SK-N-SH (cell line): ENCODE measurements at regions of chr1 and their contacts with region 1.

Region 1: DNA sequence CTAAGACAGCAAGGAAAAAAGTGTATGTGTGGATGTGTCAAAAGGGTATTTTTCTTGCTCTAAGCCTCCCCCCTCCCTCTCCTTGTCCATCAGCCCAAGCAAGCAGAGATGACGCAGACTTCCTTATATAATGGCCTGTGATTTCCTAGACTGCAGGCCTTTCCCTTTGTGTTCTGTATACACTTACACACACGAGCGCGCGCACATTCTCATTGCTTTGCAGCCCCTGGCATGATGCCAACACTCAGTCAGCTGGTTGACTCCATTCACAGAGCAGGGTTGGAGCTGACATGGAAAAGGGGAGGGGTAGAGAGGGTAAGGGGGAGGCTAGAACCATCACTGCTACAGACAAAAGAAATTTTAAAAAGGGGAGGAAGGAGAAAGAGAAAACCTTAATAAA is 41.8 kb downstream of the GATAD2B start:
- DNase-seq: peak; percentile 81
- H3K4me3 ChIP-seq: peak overlapping the region; percentile 36 to 56
- H3K27ac ChIP-seq: peak overlapping the region; percentile 87 to 90
- H3K4me1 ChIP-seq: peaks cover 15 to 16% of the 10 kb centered on the region in 2 experiments
- H3K27me3 ChIP-seq: no peaks in the 10 kb centered on the region
- CTCF ChIP-seq: no peak
- EP300 ChIP-seq: no peak; a peak in 1 of 4 replicates
- RAD21 ChIP-seq: no peak

Region 2: DNA sequence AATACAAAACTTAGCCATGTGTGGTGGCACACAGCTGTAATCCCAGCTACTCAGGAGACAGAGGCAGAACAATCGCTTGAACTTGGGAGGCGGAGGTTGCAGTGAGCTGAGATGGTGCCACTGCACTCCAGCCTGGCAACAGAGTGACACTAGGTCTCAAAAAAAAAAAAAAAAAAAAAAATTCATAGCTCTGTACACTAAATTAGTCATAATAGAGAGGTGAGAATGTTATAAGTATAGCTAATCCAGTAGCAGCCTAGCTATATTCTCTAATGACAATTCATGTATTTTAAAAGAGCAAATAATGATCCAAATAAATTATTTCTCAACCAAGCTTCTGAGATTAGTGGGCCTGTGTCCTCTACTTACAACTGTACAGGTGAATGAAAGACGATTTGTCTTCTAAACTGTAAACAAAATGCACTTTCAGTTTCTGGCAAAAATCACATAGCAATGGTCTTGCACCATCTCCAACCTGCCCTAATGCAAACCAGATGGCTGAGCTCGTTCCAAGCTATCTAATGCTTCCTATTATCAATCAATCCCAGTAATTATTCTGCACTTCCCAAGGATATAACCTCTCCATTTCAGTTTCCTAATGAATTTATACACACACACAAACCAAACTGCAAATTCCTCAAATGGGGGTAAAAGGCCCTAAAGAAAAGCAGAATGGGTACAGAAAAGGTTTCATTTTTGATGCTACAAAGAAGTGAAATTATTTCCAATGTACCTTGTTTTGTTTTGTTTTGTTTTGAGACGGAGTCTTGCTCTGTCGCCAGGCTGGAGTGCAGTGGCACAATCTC is 14.7 kb before region 1 on chr1:
- CTCF ChIA-PET with region 1: interaction called, 3 read pairs
- POLR2A ChIA-PET with region 1: interaction called, 11 read pairs
- DNase-seq: peak; percentile 57
- H3K4me3 ChIP-seq: peak overlapping the region in 1 of 2 experiments; percentile 28; a peak in 2 of 4 replicates
- H3K27ac ChIP-seq: peak overlapping the region; percentile 29 to 35; a peak in 3 of 4 replicates
- H3K4me1 ChIP-seq: peaks cover 8 to 14% of the 10 kb centered on the region in 2 experiments; a peak in 2 of 4 replicates
- H3K27me3 ChIP-seq: no peaks in the 10 kb centered on the region
- CTCF ChIP-seq: no peak
- EP300 ChIP-seq: no peak; a peak in 1 of 4 replicates
- RAD21 ChIP-seq: no peak

Region 3: DNA sequence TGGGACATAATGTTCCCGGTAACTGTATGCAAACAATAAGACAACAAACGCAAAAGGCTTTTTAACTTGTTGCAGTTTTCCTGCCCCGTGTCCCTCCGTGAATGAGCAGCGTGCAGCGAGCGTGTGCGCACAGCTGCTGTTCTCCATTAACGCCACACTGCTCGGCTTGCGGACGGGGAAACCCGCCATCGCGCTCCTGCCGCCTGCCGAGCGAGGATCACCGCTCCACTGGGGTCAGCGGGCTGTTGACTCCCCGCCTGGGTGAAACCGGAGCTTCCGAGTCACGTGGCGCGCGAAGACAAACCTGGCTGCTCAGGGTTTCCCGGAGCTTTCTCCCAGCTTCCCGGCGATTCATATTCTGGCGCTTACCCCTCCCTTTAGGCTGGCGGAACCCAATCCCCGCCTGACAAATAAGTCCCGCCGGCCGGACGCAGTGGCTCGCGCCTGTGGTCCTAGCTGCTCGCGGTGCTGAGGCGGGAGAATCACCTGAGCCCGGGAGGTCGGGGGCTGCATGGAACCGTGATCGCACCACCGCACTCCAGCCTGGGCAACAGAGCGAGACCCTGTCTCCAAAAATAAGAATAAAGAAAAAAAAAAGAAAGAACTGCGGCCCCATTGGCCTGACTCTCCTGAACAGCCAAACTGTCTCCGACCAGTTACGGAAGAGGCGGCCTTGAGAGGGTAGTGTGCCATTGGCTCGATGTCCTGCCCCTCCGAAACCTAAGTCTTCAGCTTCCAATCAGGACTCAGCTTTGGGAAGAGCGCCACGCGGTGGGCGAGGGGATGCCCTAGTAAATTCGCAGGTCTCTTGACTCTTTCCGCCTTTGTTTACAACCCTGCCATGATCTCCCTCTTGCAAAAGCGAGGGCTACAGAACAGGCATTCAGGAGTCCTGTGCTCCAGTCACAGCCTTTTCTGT is 86.4 kb after region 1 on chr1 and contains the start of gene CREB3L4:
- CTCF ChIA-PET with region 1: interaction called, 4 read pairs
- POLR2A ChIA-PET with region 1: interaction called, 14 read pairs
- DNase-seq: peak; percentile 87
- H3K4me3 ChIP-seq: peak within 1 kb of the TSS; percentile 61 to 85
- H3K27ac ChIP-seq: peak within 1 kb of the TSS; percentile 77 to 87
- H3K4me1 ChIP-seq: peaks cover 0 to 26% of the 10 kb centered on the region in 2 experiments; a peak in 2 of 4 replicates
- H3K27me3 ChIP-seq: no peaks in the 10 kb centered on the region
- CTCF ChIP-seq: peak; percentile 49
- EP300 ChIP-seq: 0 out of 4 replicates have a peak, but pooled peaks of 1 of the 2 experiments have one; percentile 6
- RAD21 ChIP-seq: peak; percentile 32; the same call in 1 of the 2 replicates
- polyA plus RNA-seq, gene CREB3L4: 12.8 and 16.6 TPM in 2 replicates